ENCODE measurements at regions of chr17 and their contacts with region 1.

Region 1: GRCh38 chr17:50699410-50700074 is 8.2 kb downstream of the ANKRD40 start:
- DNase-seq: no peak
- ATAC-seq: no peak
- H3K4me3 ChIP-seq: no peak overlapping the region
- H3K27ac ChIP-seq: no peak overlapping the region
- H3K4me1 ChIP-seq: peaks cover 12 to 14% of the 10 kb centered on the region in 2 donors
- H3K27me3 ChIP-seq: no peaks in the 10 kb centered on the region
- CTCF ChIP-seq: no peak
- POLR2A ChIP-seq: no peak

Region 2: GRCh38 chr17:50758989-50759544 is 59.5 kb after region 1 on chr17:
- in situ Hi-C with region 1: no loop called
- intact Hi-C with region 1: loop called (anchors 5 kb)
- DNase-seq: no peak
- ATAC-seq: peak in 1 of 2 donors; percentile 13
- H3K4me3 ChIP-seq: no peak overlapping the region
- H3K27ac ChIP-seq: no peak overlapping the region
- H3K4me1 ChIP-seq: peaks cover 0 to 2% of the 10 kb centered on the region in 2 donors
- H3K27me3 ChIP-seq: no peaks in the 10 kb centered on the region
- CTCF ChIP-seq: no peak
- POLR2A ChIP-seq: no peak